CD4-positive, alpha-beta memory T cell (primary cell): ENCODE measurements at regions of chr19 and their contacts with region 1.

Region 1: DNA sequence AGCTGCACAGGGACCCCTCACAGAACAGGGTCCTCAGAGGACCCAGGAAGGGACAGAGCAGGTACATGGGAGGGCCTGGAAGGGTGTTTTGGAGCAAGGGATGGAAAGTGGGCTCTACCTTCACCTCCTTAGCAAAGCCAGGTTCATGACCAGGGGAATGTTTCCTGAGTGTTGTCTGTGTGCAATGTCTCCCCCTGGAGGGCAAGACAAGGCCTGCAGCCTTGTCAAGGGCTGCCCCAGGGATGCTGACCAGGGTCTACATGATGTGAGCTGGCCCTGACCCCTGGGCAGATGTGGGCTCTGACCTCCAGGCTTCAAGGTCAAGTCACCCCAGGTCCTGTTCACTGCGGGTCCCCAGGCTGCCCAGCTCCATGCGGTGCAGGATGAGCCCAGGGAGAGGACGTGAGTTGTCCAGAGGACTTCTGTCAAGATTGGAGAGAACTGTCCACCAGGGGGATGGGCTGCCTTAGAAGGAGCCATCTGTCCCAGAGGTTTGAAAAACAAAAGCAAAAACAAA is 1.0 kb upstream of the CEACAM1 start:
- DNase-seq: peak; percentile 64 to 72 (median 68)
- H3K4me3 ChIP-seq: peak overlapping the region; percentile 48 to 63
- H3K4me3 Mint-ChIP-seq: peak overlapping the region; percentile 81 to 94 (median 88)
- H3K27ac ChIP-seq: peak overlapping the region; percentile 47
- H3K27ac Mint-ChIP-seq: peak overlapping the region; percentile 75 to 96 (median 88)
- H3K4me1 ChIP-seq: peaks cover 35% of the 10 kb centered on the region
- H3K4me1 Mint-ChIP-seq: peaks cover 23 to 40% (median 33%) of the 10 kb centered on the region in 4 donors
- H3K27me3 ChIP-seq: no peaks in the 10 kb centered on the region
- H3K27me3 Mint-ChIP-seq: no peaks in the 10 kb centered on the region

Region 2: DNA sequence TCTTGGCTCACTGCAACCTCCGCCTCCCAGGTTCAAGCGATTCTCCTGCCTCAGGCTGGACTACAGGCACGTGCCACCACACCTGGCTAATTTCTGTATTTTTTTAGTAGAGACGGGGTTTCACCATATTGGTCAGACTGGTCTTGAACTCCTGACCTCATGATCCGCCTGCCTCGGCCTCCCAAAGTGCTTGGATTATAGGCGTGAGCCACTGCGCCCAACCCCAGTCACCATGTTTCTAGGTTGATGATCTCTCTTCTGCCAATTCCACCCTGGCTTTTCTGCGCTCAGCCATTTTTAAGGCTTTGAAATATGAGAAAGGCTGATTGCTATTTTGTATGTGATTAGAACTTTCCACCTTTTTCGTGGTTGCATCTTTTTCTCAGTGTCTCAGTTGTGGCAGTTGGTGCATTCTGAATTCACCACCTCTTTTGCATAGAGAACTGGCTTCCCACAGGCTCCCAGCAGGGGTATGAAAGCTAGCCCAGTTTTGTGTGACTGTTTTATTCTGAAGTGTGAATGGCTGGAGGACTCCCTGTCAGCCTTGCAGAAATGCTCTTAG is 16.5 kb before region 1 on chr19:
- CTCF ChIA-PET with region 1: interaction called, 29 read pairs
- POLR2A ChIA-PET with region 1: no interaction called
- intact Hi-C with region 1: no loop called
- DNase-seq: no peak
- H3K4me3 ChIP-seq: no peak overlapping the region
- H3K4me3 Mint-ChIP-seq: peak overlapping the region in 2 of 8 donors; percentile 24 to 46
- H3K27ac ChIP-seq: no peak overlapping the region
- H3K27ac Mint-ChIP-seq: peak overlapping the region in 3 of 7 donors; percentile 21 to 70 (median 42)
- H3K4me1 ChIP-seq: peaks cover 4% of the 10 kb centered on the region
- H3K4me1 Mint-ChIP-seq: peaks cover 9 to 17% (median 13%) of the 10 kb centered on the region in 4 donors
- H3K27me3 ChIP-seq: no peaks in the 10 kb centered on the region
- H3K27me3 Mint-ChIP-seq: no peaks in the 10 kb centered on the region

Region 3: DNA sequence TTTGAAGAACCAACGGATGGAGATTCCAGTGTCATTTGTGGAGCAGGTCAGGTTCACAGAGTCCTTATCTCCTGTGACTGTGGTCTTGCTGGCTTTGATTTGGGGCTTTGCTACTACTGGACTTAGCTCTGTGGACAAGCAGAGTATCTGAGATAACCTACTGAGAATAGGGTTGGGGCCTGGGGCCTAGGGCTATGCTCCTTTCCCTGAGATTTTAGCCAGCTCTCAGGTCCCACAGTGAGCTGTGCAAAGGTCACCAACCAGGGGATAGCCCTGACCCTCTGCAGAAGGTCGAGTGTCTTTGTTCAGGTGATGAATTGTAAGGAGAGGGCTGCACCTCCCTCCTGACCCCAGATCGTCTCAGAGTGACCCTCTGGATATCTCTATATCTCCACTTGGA is 10.2 kb before region 1 on chr19:
- CTCF ChIA-PET with region 1: interaction called, 29 read pairs
- POLR2A ChIA-PET with region 1: no interaction called
- intact Hi-C with region 1: no loop called
- DNase-seq: no peak
- H3K4me3 ChIP-seq: no peak overlapping the region
- H3K4me3 Mint-ChIP-seq: no peak overlapping the region
- H3K27ac ChIP-seq: no peak overlapping the region
- H3K27ac Mint-ChIP-seq: peak overlapping the region in 2 of 7 donors; percentile 14 to 16
- H3K4me1 ChIP-seq: no peaks in the 10 kb centered on the region
- H3K4me1 Mint-ChIP-seq: peaks cover 3 to 8% (median 4%) of the 10 kb centered on the region in 4 donors
- H3K27me3 ChIP-seq: no peaks in the 10 kb centered on the region
- H3K27me3 Mint-ChIP-seq: no peaks in the 10 kb centered on the region